ENCODE measurements at regions of chr1 and their contacts with region 1.

Region 1: GRCh38 chr1:109532365-109533136 is 7.1 kb upstream of the GPR61 start:
- DNase-seq: peak; percentile 95
- ATAC-seq: peak; percentile 90
- H3K4me3 Mint-ChIP-seq: peak overlapping the region; percentile 15
- H3K27ac Mint-ChIP-seq: peak overlapping the region; percentile 71
- H3K4me1 Mint-ChIP-seq: peaks cover 22% of the 10 kb centered on the region
- H3K27me3 Mint-ChIP-seq: no peaks in the 10 kb centered on the region

Region 2: GRCh38 chr1:108901106-108901505 is 631.4 kb before region 1 on chr1:
- CTCF ChIA-PET with region 1: no interaction called
- POLR2A ChIA-PET with region 1: no interaction called
- intact Hi-C with region 1: no loop called
- DNase-seq: no peak
- ATAC-seq: no peak
- H3K4me3 Mint-ChIP-seq: no peak overlapping the region
- H3K27ac Mint-ChIP-seq: no peak overlapping the region
- H3K4me1 Mint-ChIP-seq: no peaks in the 10 kb centered on the region
- H3K27me3 Mint-ChIP-seq: no peaks in the 10 kb centered on the region

Region 3: GRCh38 chr1:109041621-109042468 is 490.7 kb before region 1 on chr1 and contains the start of gene WDR47:
- CTCF ChIA-PET with region 1: no interaction called
- POLR2A ChIA-PET with region 1: no interaction called
- intact Hi-C with region 1: loop called in 1 of 2 experiments (anchors 2 kb)
- DNase-seq: peak; percentile 98
- ATAC-seq: peak; percentile 99
- H3K4me3 Mint-ChIP-seq: peak within 1 kb of the TSS; percentile 82
- H3K27ac Mint-ChIP-seq: peak within 1 kb of the TSS; percentile 65
- H3K4me1 Mint-ChIP-seq: peaks cover 16% of the 10 kb centered on the region
- H3K27me3 Mint-ChIP-seq: no peaks in the 10 kb centered on the region
- total RNA-seq, gene WDR47: 6.9 to 7.6 TPM

Region 4: GRCh38 chr1:109263597-109264398 is 268.8 kb before region 1 on chr1:
- CTCF ChIA-PET with region 1: interaction called, 3 read pairs
- POLR2A ChIA-PET with region 1: no interaction called
- intact Hi-C with region 1: loop called (anchors 1 to 2 kb)
- DNase-seq: peak; percentile 92
- ATAC-seq: peak; percentile 98
- H3K4me3 Mint-ChIP-seq: no peak overlapping the region
- H3K27ac Mint-ChIP-seq: peak overlapping the region; percentile 89
- H3K4me1 Mint-ChIP-seq: no peaks in the 10 kb centered on the region
- H3K27me3 Mint-ChIP-seq: no peaks in the 10 kb centered on the region

Region 5: GRCh38 chr1:109397538-109398342 is 134.8 kb before region 1 on chr1 and contains the start of gene SORT1:
- CTCF ChIA-PET with region 1: interaction called, 20 read pairs
- POLR2A ChIA-PET with region 1: no interaction called
- intact Hi-C with region 1: loop called (anchors 1 to 2 kb)
- DNase-seq: peak; percentile 75
- ATAC-seq: peak; percentile 97
- H3K4me3 Mint-ChIP-seq: peak within 1 kb of the TSS; percentile 71
- H3K27ac Mint-ChIP-seq: no peak within 1 kb of the TSS
- H3K4me1 Mint-ChIP-seq: peaks cover 13% of the 10 kb centered on the region
- H3K27me3 Mint-ChIP-seq: peaks cover 36% of the 10 kb centered on the region
- total RNA-seq, gene SORT1: 0.39 to 0.55 TPM

Region 6: GRCh38 chr1:109493805-109494539 is 38.6 kb before region 1 on chr1 and contains the start of gene CYB561D1:
- CTCF ChIA-PET with region 1: interaction called, 864 read pairs
- POLR2A ChIA-PET with region 1: interaction called, 7 read pairs
- intact Hi-C with region 1: loop called (anchors 1 kb)
- DNase-seq: peak; percentile 95
- ATAC-seq: peak; percentile 89
- H3K4me3 Mint-ChIP-seq: peak within 1 kb of the TSS; percentile 98
- H3K27ac Mint-ChIP-seq: peak within 1 kb of the TSS; percentile 90
- H3K4me1 Mint-ChIP-seq: peaks cover 45% of the 10 kb centered on the region
- H3K27me3 Mint-ChIP-seq: no peaks in the 10 kb centered on the region
- total RNA-seq, gene CYB561D1: 7.1 to 8.7 TPM

Region 7: GRCh38 chr1:109643385-109644230 is 111.1 kb after region 1 on chr1:
- CTCF ChIA-PET with region 1: interaction called, 22 read pairs
- POLR2A ChIA-PET with region 1: no interaction called
- intact Hi-C with region 1: no loop called
- DNase-seq: peak; percentile 95
- ATAC-seq: peak; percentile 98
- H3K4me3 Mint-ChIP-seq: no peak overlapping the region
- H3K27ac Mint-ChIP-seq: no peak overlapping the region
- H3K4me1 Mint-ChIP-seq: peaks cover 10% of the 10 kb centered on the region
- H3K27me3 Mint-ChIP-seq: no peaks in the 10 kb centered on the region